ENCODE measurements at regions of chr11 and their contacts with region 1.

Region 1: DNA sequence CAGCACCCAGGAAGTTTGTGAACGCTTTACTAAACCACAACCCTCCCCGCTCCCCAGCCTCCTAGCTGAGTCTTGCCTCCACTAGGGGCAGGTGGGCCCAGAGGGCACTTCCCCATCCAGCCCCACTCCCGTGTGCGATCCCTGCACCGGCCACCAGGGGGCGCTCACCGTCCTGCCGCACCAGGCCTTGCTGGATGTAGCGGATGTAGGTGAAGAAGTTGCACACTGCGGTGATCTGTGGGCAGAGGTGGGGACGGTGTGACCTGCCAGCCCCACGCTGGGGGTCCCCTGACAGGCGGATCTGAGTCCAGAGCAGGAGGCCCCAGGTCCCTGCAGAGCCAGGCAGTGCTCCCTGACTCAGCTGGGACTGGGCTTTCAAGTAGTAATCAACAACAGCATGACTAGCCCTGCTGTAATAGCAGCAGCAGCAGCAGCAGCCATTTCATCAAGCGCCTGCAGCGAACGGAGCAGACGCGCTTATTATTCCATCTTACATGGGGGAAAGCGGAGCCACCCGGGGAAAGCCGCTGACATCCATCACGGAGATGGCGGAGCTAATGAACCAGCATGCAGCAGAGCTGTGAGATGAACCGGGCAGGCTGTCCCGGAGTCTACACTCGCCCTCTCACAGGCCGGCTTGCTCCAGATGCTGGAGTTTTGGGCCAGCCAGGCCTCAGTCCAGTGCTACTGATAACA is 7.9 kb upstream of the FADS3 start:
- DNase-seq: peak; percentile 98
- ATAC-seq: peak; percentile 80
- H3K4me3 Mint-ChIP-seq: no peak overlapping the region
- H3K27ac Mint-ChIP-seq: no peak overlapping the region
- H3K4me1 Mint-ChIP-seq: peaks cover 20% of the 10 kb centered on the region
- H3K27me3 Mint-ChIP-seq: no peaks in the 10 kb centered on the region
- CTCF ChIP-seq: peak; percentile 100

Region 2: GRCh38 chr11:61827571-61828378 is 71.5 kb before region 1 on chr11 and contains the start of gene FADS2:
- CTCF ChIA-PET with region 1: interaction called, 14 read pairs
- POLR2A ChIA-PET with region 1: no interaction called
- DNase-seq: peak; percentile 89
- ATAC-seq: peak; percentile 70
- H3K4me3 Mint-ChIP-seq: peak within 1 kb of the TSS; percentile 85
- H3K27ac Mint-ChIP-seq: peak within 1 kb of the TSS; percentile 97
- H3K4me1 Mint-ChIP-seq: peaks cover 48% of the 10 kb centered on the region
- H3K27me3 Mint-ChIP-seq: no peaks in the 10 kb centered on the region
- CTCF ChIP-seq: no peak
- total RNA-seq, gene FADS2: 416 to 423 TPM (median 422 TPM) in 3 replicates

Region 3: DNA sequence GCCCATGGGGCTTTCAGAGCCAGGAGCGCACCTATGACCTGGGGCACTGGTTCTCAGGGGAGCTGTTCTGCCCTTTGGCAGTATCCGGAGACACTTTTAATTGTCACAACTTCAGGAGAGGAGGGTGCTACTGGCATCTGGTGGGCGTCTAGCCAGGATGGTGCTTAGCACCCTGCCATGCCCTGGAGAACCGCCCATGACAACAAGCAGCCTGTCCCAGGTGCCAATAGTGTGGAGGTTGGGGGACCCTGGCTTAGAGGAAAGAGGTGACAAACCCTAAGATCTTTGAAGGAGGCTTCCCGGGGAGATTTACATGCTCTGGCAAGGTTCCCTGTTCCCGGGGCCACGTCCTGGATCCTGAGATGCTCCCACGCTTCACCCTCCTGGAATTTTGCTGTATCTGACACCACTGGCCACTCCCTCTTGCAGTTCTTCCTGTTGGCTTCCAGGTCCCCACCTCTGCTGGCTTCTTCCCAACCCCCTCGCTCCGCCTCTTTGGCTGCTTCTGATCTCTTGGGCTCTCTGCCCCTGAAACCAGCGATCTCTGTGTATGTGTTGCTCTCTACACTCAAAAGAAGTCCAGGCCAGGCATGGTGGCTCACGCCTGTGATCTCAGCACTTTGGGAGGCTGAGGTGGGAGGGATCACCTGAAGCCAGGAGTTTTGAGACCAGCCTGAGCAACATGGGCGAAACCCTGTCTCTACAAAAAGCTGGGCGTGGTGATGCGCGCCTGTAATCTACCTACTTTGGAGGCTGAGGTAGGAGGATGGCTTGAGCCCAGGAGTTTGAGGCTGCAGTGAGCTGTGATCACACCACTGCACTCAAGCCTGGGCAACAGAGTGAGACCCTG is 39.0 kb before region 1 on chr11:
- CTCF ChIA-PET with region 1: no interaction called
- POLR2A ChIA-PET with region 1: no interaction called
- DNase-seq: no peak
- ATAC-seq: no peak
- H3K4me3 Mint-ChIP-seq: no peak overlapping the region
- H3K27ac Mint-ChIP-seq: no peak overlapping the region
- H3K4me1 Mint-ChIP-seq: no peaks in the 10 kb centered on the region
- H3K27me3 Mint-ChIP-seq: no peaks in the 10 kb centered on the region
- CTCF ChIP-seq: no peak

Region 4: DNA sequence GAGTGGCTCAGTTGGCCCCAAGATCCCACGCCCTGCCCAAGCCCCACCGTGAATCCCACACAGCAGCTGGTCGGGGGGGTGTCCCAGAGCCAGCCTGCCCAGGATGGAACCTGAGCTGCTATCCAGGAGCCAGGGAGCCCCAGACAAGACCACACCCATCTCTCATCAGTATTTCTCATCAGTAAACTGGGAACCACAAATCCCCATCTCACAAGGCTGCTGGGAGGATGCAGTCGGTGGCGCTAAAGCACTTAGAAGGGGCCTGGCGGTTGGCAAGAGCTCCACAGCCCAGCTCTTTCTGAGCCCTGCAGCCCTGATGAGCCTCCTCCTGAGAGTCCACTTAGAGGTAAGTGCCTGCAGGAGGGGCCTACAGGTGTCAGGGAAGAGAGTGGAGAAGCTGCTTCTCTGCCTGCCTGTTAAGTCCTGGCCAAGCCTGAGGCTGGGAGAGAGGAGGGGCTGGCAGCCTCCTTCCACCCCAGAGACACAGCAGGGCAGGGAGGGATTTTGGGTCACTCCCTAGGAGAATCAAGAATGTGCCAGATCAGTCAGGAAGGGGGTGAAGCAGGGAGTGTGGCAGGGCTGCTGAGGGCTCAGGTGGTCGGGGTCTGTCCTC is 14.0 kb before region 1 on chr11:
- CTCF ChIA-PET with region 1: interaction called, 33 read pairs
- POLR2A ChIA-PET with region 1: no interaction called
- DNase-seq: no peak
- ATAC-seq: peak; percentile 27
- H3K4me3 Mint-ChIP-seq: no peak overlapping the region
- H3K27ac Mint-ChIP-seq: no peak overlapping the region
- H3K4me1 Mint-ChIP-seq: peaks cover 22% of the 10 kb centered on the region
- H3K27me3 Mint-ChIP-seq: 0 out of 2 replicates have a peak, but pooled peaks cover 4% of the 10 kb centered on the region
- CTCF ChIP-seq: no peak

Region 5: GRCh38 chr11:61928606-61929005 is 29.3 kb after region 1 on chr11:
- CTCF ChIA-PET with region 1: interaction called, 95 read pairs
- POLR2A ChIA-PET with region 1: no interaction called
- DNase-seq: no peak
- ATAC-seq: no peak
- H3K4me3 Mint-ChIP-seq: no peak overlapping the region
- H3K27ac Mint-ChIP-seq: no peak overlapping the region
- H3K4me1 Mint-ChIP-seq: peaks cover 28% of the 10 kb centered on the region
- H3K27me3 Mint-ChIP-seq: peaks cover under 1% of the 10 kb centered on the region; the same call in 1 of the 2 replicates
- CTCF ChIP-seq: no peak

Region 6: DNA sequence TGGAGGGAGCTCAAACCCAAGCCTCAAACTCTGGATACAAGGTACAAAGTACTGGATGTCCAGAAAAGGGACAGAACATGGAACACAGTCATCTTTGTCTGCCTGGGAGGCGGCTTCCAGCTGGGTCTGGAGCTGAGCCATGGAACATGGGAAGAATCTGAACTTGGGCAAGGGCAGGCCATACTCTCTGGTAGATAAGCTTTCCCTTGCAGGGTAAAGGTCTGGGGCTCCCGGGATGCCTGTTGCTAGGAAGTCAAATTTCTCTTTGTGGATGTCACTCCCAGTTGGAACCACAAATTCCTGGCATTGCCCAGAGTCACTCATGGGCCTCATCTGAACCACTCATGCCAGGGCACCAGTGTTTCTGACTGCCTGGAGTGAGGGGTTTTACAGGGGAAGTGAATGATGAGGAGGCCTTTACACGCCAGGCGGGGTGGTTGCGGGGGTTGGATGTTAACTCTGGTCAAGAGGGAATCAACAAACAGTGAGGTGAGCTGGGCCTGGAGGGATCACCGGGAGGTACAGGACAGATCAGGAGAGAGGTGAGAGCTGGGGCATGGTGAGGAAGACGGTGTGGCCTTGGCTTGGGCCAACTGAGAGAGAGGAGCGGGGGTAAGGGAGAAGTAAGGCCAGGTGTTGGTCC is 62.4 kb after region 1 on chr11:
- CTCF ChIA-PET with region 1: interaction called, 11 read pairs
- POLR2A ChIA-PET with region 1: no interaction called
- DNase-seq: no peak
- ATAC-seq: no peak; the same call in 1 of the 2 replicates
- H3K4me3 Mint-ChIP-seq: no peak overlapping the region
- H3K27ac Mint-ChIP-seq: no peak overlapping the region
- H3K4me1 Mint-ChIP-seq: peaks cover 11% of the 10 kb centered on the region; the same call in 1 of the 2 replicates
- H3K27me3 Mint-ChIP-seq: no peaks in the 10 kb centered on the region; the same call in 1 of the 2 replicates
- CTCF ChIP-seq: no peak

Region 7: GRCh38 chr11:61996933-61997332 is 97.6 kb after region 1 on chr11:
- CTCF ChIA-PET with region 1: interaction called, 17 read pairs
- POLR2A ChIA-PET with region 1: no interaction called
- DNase-seq: no peak
- ATAC-seq: peak; percentile 74
- H3K4me3 Mint-ChIP-seq: no peak overlapping the region
- H3K27ac Mint-ChIP-seq: no peak overlapping the region
- H3K4me1 Mint-ChIP-seq: peaks cover 19% of the 10 kb centered on the region
- H3K27me3 Mint-ChIP-seq: peaks cover 3% of the 10 kb centered on the region; the same call in 1 of the 2 replicates
- CTCF ChIP-seq: no peak

Region 8: GRCh38 chr11:62081378-62082291 is 182.3 kb after region 1 on chr11:
- CTCF ChIA-PET with region 1: interaction called, 255 read pairs
- POLR2A ChIA-PET with region 1: no interaction called
- DNase-seq: peak; percentile 89
- ATAC-seq: peak; percentile 89
- H3K4me3 Mint-ChIP-seq: no peak overlapping the region
- H3K27ac Mint-ChIP-seq: no peak overlapping the region
- H3K4me1 Mint-ChIP-seq: no peaks in the 10 kb centered on the region; the same call in 1 of the 2 replicates
- H3K27me3 Mint-ChIP-seq: no peaks in the 10 kb centered on the region; the same call in 1 of the 2 replicates
- CTCF ChIP-seq: peak; percentile 84

Measured in WTC11 (cell line).